Activated T-helper 2 cell treated with anti-CD3 and anti-CD28 coated beads, Interferon-gamma antibody, Interleukin-2, Interleukin-4, amounts not matched to agents 10 μg/mL and 5 μg/mL and 100 μg/mL, durations not matched to agents 14 hours and 24 hours and 36 hours (primary cell): ENCODE measurements at regions of chr14 and their contacts with region 1.

Region 1: GRCh38 chr14:21383848-21384493 is at the start of gene SUPT16H:
- DNase-seq: peak; percentile 94
- H3K4me3 Mint-ChIP-seq: peak within 1 kb of the TSS; percentile 96
- H3K27ac Mint-ChIP-seq: peak within 1 kb of the TSS; percentile 98
- H3K4me1 Mint-ChIP-seq: peaks cover 24% of the 10 kb centered on the region
- H3K27me3 Mint-ChIP-seq: no peaks in the 10 kb centered on the region
- total RNA-seq, gene SUPT16H: 161 and 168 TPM in 2 replicates

Region 2: GRCh38 chr14:21263656-21264411 is 120.1 kb before region 1 on chr14:
- intact Hi-C with region 1: loop called (anchors 1 kb)
- DNase-seq: no peak
- H3K4me3 Mint-ChIP-seq: peak overlapping the region; percentile 99
- H3K27ac Mint-ChIP-seq: peak overlapping the region; percentile 96
- H3K4me1 Mint-ChIP-seq: peaks cover 61% of the 10 kb centered on the region
- H3K27me3 Mint-ChIP-seq: no peaks in the 10 kb centered on the region

Region 3: GRCh38 chr14:21308479-21309237 is 75.3 kb before region 1 on chr14:
- intact Hi-C with region 1: no loop called
- DNase-seq: peak; percentile 67
- H3K4me3 Mint-ChIP-seq: peak overlapping the region; percentile 74
- H3K27ac Mint-ChIP-seq: peak overlapping the region; percentile 53
- H3K4me1 Mint-ChIP-seq: peaks cover 17% of the 10 kb centered on the region
- H3K27me3 Mint-ChIP-seq: peaks cover 6% of the 10 kb centered on the region

Region 4: DNA sequence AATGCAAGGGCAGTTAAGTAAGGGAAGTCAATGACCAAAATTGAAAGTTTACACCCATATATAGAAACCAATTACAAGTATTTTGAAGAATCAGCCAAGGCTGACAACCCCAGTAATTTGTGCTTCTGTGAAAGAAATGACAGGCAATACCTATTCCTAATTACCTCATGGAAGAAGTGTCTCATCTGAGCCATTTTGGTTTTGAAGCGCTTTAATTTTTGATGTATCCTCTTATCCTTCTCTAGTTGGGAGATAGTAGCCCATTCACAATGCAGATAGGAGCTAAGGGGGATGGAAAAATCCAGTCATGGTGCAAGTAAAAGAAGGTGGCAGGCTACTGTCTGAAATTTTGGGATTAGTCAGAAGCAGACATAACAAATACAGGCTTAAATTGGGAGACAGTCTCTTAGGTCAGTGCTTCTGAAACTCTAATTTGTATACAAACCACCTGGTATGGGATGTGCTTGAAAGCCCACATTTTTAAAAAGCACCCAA is 30.2 kb after region 1 on chr14:
- intact Hi-C with region 1: loop called (anchors 1 kb)
- DNase-seq: no peak
- H3K4me3 Mint-ChIP-seq: no peak overlapping the region
- H3K27ac Mint-ChIP-seq: peak overlapping the region; percentile 91
- H3K4me1 Mint-ChIP-seq: peaks cover 26% of the 10 kb centered on the region
- H3K27me3 Mint-ChIP-seq: no peaks in the 10 kb centered on the region

Region 5: GRCh38 chr14:21455911-21456667 is 72.1 kb after region 1 on chr14 and contains the start of gene CHD8:
- intact Hi-C with region 1: loop called (anchors 1 kb)
- DNase-seq: peak; percentile 100
- H3K4me3 Mint-ChIP-seq: peak within 1 kb of the TSS; percentile 94
- H3K27ac Mint-ChIP-seq: peak within 1 kb of the TSS; percentile 99
- H3K4me1 Mint-ChIP-seq: peaks cover 28% of the 10 kb centered on the region
- H3K27me3 Mint-ChIP-seq: no peaks in the 10 kb centered on the region
- total RNA-seq, gene CHD8: 120 and 124 TPM in 2 replicates

Region 6: GRCh38 chr14:21748869-21749303 is 364.9 kb after region 1 on chr14:
- intact Hi-C with region 1: no loop called
- DNase-seq: peak; percentile 37
- H3K4me3 Mint-ChIP-seq: peak overlapping the region; percentile 51
- H3K27ac Mint-ChIP-seq: peak overlapping the region; percentile 34
- H3K4me1 Mint-ChIP-seq: peaks cover 6% of the 10 kb centered on the region
- H3K27me3 Mint-ChIP-seq: peaks cover 19% of the 10 kb centered on the region